Activated CD8-positive, alpha-beta memory T cell treated with anti-CD3 and anti-CD28 coated beads, Interleukin-2, amount 10 ng/mL, durations not matched to agents 7 days and 5 days (primary cell): ENCODE measurements at regions of chr5 and their contacts with region 1.

Region 1: GRCh38 chr5:76256116-76256889 is 146.8 kb upstream of the IQGAP2 start:
- DNase-seq: peak; percentile 81
- ATAC-seq: peak; percentile 95
- H3K4me3 Mint-ChIP-seq: no peak overlapping the region
- H3K27ac Mint-ChIP-seq: peak overlapping the region; percentile 26
- H3K4me1 Mint-ChIP-seq: peaks cover 13% of the 10 kb centered on the region
- H3K27me3 Mint-ChIP-seq: peaks cover 22% of the 10 kb centered on the region

Region 2: DNA sequence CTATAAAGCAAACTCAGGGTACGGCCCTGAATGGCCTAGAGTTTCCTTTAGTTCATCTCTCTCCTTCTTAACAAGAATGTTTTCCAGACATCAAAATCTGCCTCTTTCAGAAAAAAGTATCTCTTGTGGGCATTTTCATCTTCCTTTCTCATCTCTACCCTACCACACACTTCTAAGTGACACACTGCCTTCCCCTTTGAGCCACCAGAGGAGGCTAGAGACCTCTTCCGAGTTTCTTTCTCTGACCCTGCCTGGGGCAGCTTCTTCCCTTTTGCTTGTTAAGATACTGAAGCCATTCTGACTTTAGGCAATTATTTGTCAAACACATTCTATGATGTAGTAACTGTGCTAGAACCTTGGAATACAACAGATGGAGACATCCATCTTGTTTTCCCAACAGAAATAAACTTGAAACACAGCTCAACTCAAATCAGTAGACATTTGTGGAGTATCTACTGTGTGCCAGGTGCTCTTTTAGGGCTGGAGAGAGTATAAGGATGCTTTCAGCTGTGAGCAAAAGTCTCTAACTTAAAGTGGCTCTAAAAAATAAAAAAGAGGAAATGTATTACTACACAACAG is 181.7 kb before region 1 on chr5:
- CTCF ChIA-PET with region 1: interaction called, 15 read pairs
- DNase-seq: peak; percentile 57
- ATAC-seq: peak; percentile 61
- H3K4me3 Mint-ChIP-seq: no peak overlapping the region
- H3K27ac Mint-ChIP-seq: no peak overlapping the region
- H3K4me1 Mint-ChIP-seq: peaks cover 7% of the 10 kb centered on the region
- H3K27me3 Mint-ChIP-seq: peaks cover 76% of the 10 kb centered on the region

Region 3: DNA sequence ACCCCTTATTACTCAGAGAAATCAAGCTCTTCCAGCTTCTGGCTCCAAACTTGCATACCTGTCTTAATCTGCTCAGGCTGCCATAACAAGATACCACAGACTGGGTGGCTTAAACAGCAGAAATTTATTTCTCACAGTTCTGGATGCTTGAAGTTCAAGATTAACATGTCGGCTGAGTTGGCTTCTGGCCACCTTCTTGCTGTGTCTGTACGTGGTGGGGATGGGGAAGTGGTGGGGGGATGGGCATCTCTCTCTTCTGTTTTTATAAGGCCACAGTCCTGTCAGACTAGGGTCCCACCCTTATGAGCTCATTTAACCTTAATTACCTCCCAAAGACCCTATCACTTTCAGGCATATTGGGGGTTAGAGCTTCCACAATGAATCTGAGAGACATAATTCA is 32.6 kb before region 1 on chr5:
- CTCF ChIA-PET with region 1: no interaction called
- DNase-seq: no peak
- ATAC-seq: no peak
- H3K4me3 Mint-ChIP-seq: no peak overlapping the region
- H3K27ac Mint-ChIP-seq: no peak overlapping the region
- H3K4me1 Mint-ChIP-seq: no peaks in the 10 kb centered on the region
- H3K27me3 Mint-ChIP-seq: no peaks in the 10 kb centered on the region

Region 4: GRCh38 chr5:76269259-76269931 is 13.1 kb after region 1 on chr5:
- CTCF ChIA-PET with region 1: interaction called, 17 read pairs
- DNase-seq: peak; percentile 80
- ATAC-seq: peak; percentile 95
- H3K4me3 Mint-ChIP-seq: peak overlapping the region; percentile 59
- H3K27ac Mint-ChIP-seq: peak overlapping the region; percentile 89
- H3K4me1 Mint-ChIP-seq: peaks cover 45% of the 10 kb centered on the region
- H3K27me3 Mint-ChIP-seq: no peaks in the 10 kb centered on the region

Region 5: DNA sequence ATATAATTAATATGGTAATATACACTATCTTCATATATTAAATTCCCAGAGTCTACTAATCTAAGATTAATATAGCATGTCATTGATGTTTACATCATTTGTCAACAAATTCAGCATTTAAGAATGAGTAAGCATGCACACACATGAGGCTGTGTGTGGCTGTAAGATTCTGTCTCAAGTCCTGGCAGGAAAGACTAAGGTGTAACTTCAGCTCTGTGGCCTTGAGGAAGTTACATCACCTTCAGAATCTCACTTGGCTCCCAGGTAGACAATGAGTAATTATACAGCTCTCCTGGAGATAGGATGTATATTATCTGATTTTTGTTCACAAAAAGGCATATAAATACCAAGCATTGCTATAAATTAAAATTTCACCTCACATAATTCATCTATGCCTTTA is 27.4 kb after region 1 on chr5:
- CTCF ChIA-PET with region 1: no interaction called
- DNase-seq: no peak
- ATAC-seq: no peak
- H3K4me3 Mint-ChIP-seq: no peak overlapping the region
- H3K27ac Mint-ChIP-seq: no peak overlapping the region
- H3K4me1 Mint-ChIP-seq: peaks cover 6% of the 10 kb centered on the region
- H3K27me3 Mint-ChIP-seq: no peaks in the 10 kb centered on the region

Region 6: DNA sequence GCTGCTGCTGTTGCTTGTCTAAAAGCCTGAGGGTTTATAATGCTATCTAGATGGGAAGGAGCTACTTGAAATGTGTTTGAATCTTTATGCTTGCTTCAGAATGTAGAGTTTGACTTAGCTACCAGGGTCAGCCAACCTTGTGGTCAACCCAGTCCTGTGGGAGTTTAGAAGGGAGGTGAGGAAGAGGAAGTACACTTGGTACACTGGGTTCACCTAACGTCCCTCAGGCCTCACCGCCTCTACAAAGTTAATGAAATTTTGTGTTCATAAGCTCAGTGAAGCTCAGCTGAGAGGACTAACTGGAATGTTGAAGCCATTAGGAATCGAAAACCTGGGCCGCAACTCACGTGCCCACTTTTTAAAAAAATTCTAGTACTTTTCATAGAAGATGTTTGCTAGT is 157.4 kb after region 1 on chr5:
- CTCF ChIA-PET with region 1: no interaction called
- DNase-seq: no peak
- ATAC-seq: no peak
- H3K4me3 Mint-ChIP-seq: no peak overlapping the region
- H3K27ac Mint-ChIP-seq: no peak overlapping the region
- H3K4me1 Mint-ChIP-seq: peaks cover 34% of the 10 kb centered on the region
- H3K27me3 Mint-ChIP-seq: no peaks in the 10 kb centered on the region

Region 7: DNA sequence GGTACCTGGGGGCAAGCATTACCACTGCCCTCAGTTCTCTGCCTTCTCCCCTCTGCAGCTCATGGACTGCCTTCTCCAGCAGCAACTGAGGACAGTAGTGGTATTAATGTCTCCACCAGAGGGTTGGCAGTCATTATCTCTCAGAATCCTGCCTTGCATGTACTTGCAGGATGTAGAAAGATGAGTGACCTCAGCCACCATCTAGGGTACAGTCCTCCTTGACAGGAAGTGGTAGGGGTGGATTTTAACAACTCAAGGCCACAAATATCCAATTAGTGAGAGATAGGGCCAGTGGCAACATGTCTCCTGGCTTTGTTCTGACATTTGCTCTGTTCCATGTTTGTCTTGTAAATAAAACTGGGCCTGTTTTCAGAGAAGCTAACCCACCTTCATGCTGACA is 506.8 kb after region 1 on chr5:
- CTCF ChIA-PET with region 1: no interaction called
- DNase-seq: peak; percentile 75
- ATAC-seq: peak; percentile 96
- H3K4me3 Mint-ChIP-seq: no peak overlapping the region
- H3K27ac Mint-ChIP-seq: peak overlapping the region; percentile 40
- H3K4me1 Mint-ChIP-seq: peaks cover 17% of the 10 kb centered on the region
- H3K27me3 Mint-ChIP-seq: no peaks in the 10 kb centered on the region